ENCODE measurements at regions of chr19 and their contacts with region 1.

Region 1: GRCh38 chr19:21767065-21767800 is at the start of gene ZNF100:
- DNase-seq: peak; percentile 94
- ATAC-seq: peak; percentile 98
- H3K4me3 Mint-ChIP-seq: peak within 1 kb of the TSS; percentile 98
- H3K27ac Mint-ChIP-seq: peak within 1 kb of the TSS; percentile 95
- H3K4me1 Mint-ChIP-seq: peaks cover 30% of the 10 kb centered on the region
- H3K27me3 Mint-ChIP-seq: no peaks in the 10 kb centered on the region
- total RNA-seq, gene ZNF100: 24.7 to 27.0 TPM

Region 2: GRCh38 chr19:21396893-21397572 is 370.2 kb before region 1 on chr19 and contains the start of gene ZNF493:
- CTCF ChIA-PET with region 1: no interaction called
- POLR2A ChIA-PET with region 1: no interaction called
- intact Hi-C with region 1: loop called in 1 of 2 experiments (anchors 2 kb)
- DNase-seq: peak; percentile 95
- ATAC-seq: peak; percentile 100
- H3K4me3 Mint-ChIP-seq: peak within 1 kb of the TSS; percentile 98
- H3K27ac Mint-ChIP-seq: peak within 1 kb of the TSS; percentile 92
- H3K4me1 Mint-ChIP-seq: peaks cover 32% of the 10 kb centered on the region
- H3K27me3 Mint-ChIP-seq: no peaks in the 10 kb centered on the region
- total RNA-seq, gene ZNF493: 11.9 to 12.8 TPM

Region 3: DNA sequence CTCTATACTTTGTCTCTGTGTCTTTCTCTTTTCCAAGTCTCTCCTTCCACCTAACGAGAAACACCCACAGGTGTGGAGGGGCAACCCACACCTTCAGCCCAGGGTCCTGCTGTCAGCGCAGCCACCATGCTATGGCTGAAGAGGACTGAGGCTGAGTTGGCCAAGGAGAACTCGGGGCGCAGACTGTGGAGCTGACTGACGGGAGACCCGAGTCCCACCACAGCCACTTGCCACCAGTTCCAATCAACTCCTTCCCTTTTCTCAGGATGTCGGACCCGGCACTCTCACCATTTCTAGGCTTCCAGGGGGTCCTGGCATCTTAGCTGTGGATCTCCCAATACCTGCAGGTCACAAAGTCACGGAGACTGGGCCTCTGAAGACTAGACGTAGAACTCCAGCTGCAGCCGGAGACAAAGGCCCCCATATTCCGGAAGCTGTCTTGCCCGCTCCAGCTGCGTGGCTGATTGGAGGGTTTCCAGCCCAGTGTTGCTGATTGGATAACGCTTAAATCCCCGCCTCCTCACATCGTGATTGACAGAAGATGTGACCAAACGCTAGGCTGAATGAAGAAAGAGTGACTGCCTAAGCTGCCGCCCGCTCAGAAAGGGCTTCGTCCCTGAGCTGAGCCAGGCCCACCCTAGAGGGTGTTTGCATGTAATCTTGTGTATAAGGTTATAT is 198.3 kb before region 1 on chr19:
- CTCF ChIA-PET with region 1: no interaction called
- POLR2A ChIA-PET with region 1: interaction called, 3 read pairs
- intact Hi-C with region 1: loop called in 1 of 2 experiments (anchors 5 kb)
- DNase-seq: peak; percentile 92
- ATAC-seq: peak; percentile 97
- H3K4me3 Mint-ChIP-seq: peak overlapping the region; percentile 86
- H3K27ac Mint-ChIP-seq: peak overlapping the region; percentile 100
- H3K4me1 Mint-ChIP-seq: peaks cover 29% of the 10 kb centered on the region
- H3K27me3 Mint-ChIP-seq: no peaks in the 10 kb centered on the region

Region 4: DNA sequence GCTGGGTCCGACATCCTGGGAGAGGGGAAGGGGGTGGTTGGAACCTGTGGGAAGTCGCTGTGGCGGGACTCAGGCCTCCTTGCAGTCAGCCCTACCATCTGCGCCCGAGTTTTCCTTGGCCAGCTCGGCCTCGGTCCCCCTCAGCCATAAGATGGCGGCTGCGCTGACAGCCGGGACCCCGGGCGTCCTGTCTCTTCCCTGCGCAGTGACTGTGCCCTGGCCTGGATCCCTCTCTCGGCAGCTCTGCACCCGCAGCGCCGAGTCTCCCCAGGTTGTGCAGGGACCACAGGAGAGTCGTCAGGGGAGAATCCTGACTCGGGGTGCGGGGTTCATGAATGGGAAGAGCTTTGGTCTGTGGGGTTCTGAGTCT is 285.4 kb after region 1 on chr19:
- CTCF ChIA-PET with region 1: no interaction called
- POLR2A ChIA-PET with region 1: interaction called, 7 read pairs
- intact Hi-C with region 1: loop called in 1 of 2 experiments (anchors 5 kb)
- DNase-seq: peak; percentile 52
- ATAC-seq: peak; percentile 47
- H3K4me3 Mint-ChIP-seq: peak overlapping the region; percentile 90
- H3K27ac Mint-ChIP-seq: peak overlapping the region; percentile 93
- H3K4me1 Mint-ChIP-seq: peaks cover 5% of the 10 kb centered on the region
- H3K27me3 Mint-ChIP-seq: no peaks in the 10 kb centered on the region

Region 5: GRCh38 chr19:22634450-22634827 is 867.2 kb after region 1 on chr19:
- CTCF ChIA-PET with region 1: no interaction called
- POLR2A ChIA-PET with region 1: no interaction called
- intact Hi-C with region 1: loop called in 1 of 2 experiments (anchors 10 kb)
- DNase-seq: peak; percentile 36
- ATAC-seq: peak; percentile 28
- H3K4me3 Mint-ChIP-seq: peak overlapping the region; percentile 93
- H3K27ac Mint-ChIP-seq: peak overlapping the region; percentile 94
- H3K4me1 Mint-ChIP-seq: peaks cover 6% of the 10 kb centered on the region
- H3K27me3 Mint-ChIP-seq: no peaks in the 10 kb centered on the region

Measured in activated CD4-positive, alpha-beta T cell treated with anti-CD3 and anti-CD28 coated beads for 36 hours (primary cell).